ENCODE measurements at regions of chr16 and their contacts with region 1.

Region 1: GRCh38 chr16:13463619-13464018 is 456.3 kb upstream of the ERCC4 start:
- DNase-seq: no peak

Region 2: GRCh38 chr16:13390093-13390985 is 73.3 kb before region 1 on chr16:
- intact Hi-C with region 1: loop called in 1 of 2 experiments (anchors 2 kb)
- DNase-seq: no peak

Region 3: GRCh38 chr16:13733546-13733945 is 269.9 kb after region 1 on chr16:
- intact Hi-C with region 1: no loop called
- DNase-seq: no peak

Measured in posterior vena cava (tissue), 2 donors.